CD4-positive, alpha-beta T cell (primary cell): ENCODE measurements at regions of chr11 and their contacts with region 1.

Region 1: GRCh38 chr11:68855205-68855981 is 13.7 kb upstream of the CPT1A start:
- DNase-seq: peak in 7 of 14 experiments; percentile 5 to 68 (median 29)
- ATAC-seq: peak; percentile 68
- H3K4me3 ChIP-seq: peak overlapping the region; percentile 53
- H3K4me3 Mint-ChIP-seq: peak overlapping the region; percentile 54
- H3K27ac ChIP-seq: no peak overlapping the region
- H3K27ac Mint-ChIP-seq: no peak overlapping the region
- H3K4me1 ChIP-seq: peaks cover 17% of the 10 kb centered on the region
- H3K4me1 Mint-ChIP-seq: peaks cover 4% of the 10 kb centered on the region
- H3K27me3 ChIP-seq: peaks cover 19 to 24% of the 10 kb centered on the region in 2 experiments
- H3K27me3 Mint-ChIP-seq: peaks cover 31% of the 10 kb centered on the region
- CTCF ChIP-seq: peak; percentile 21

Region 2: GRCh38 chr11:68598816-68599653 is 256.4 kb before region 1 on chr11:
- CTCF ChIA-PET with region 1: no interaction called
- POLR2A ChIA-PET with region 1: no interaction called
- intact Hi-C with region 1: loop called in 1 of 2 experiments (anchors 10 kb)
- DNase-seq: no peak
- ATAC-seq: no peak
- H3K4me3 ChIP-seq: no peak overlapping the region
- H3K4me3 Mint-ChIP-seq: no peak overlapping the region
- H3K27ac ChIP-seq: no peak overlapping the region
- H3K27ac Mint-ChIP-seq: no peak overlapping the region
- H3K4me1 ChIP-seq: no peaks in the 10 kb centered on the region
- H3K4me1 Mint-ChIP-seq: no peaks in the 10 kb centered on the region
- H3K27me3 ChIP-seq: no peaks in the 10 kb centered on the region
- H3K27me3 Mint-ChIP-seq: no peaks in the 10 kb centered on the region
- CTCF ChIP-seq: no peak

Region 3: DNA sequence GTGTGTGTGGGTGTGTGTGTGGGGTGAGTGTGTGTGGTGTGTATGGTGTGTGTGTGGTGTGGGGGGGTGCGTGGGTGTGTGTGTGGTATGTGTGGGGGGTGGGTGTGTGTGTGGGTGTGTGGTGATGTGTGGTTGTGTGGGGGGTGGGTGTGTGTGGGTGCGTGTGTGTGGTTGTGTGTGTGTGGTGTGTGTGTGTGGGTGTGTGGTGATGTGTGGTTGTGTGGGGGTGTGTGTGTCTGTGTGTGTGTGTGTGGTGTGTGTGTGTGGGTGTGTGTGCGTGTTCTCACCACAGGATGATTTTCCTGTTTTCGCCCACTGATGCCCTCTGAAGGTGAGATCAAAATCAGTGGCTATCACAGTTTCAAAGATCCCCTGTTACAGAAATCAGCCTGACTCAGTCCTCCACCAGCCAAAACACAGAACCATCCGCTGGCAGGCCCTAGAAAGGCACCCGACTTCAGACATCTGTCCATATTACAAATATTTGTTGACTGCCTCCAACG is 38.4 kb before region 1 on chr11:
- CTCF ChIA-PET with region 1: no interaction called
- POLR2A ChIA-PET with region 1: no interaction called
- intact Hi-C with region 1: loop called in 1 of 2 experiments (anchors 5 kb)
- DNase-seq: peak in 2 of 14 experiments; percentile 26 to 47
- ATAC-seq: peak; percentile 41
- H3K4me3 ChIP-seq: no peak overlapping the region
- H3K4me3 Mint-ChIP-seq: no peak overlapping the region
- H3K27ac ChIP-seq: peak overlapping the region; percentile 13 to 22
- H3K27ac Mint-ChIP-seq: peak overlapping the region; percentile 28
- H3K4me1 ChIP-seq: peaks cover 15% of the 10 kb centered on the region
- H3K4me1 Mint-ChIP-seq: peaks cover 31% of the 10 kb centered on the region
- H3K27me3 ChIP-seq: no peaks in the 10 kb centered on the region
- H3K27me3 Mint-ChIP-seq: no peaks in the 10 kb centered on the region
- CTCF ChIP-seq: no peak